ENCODE measurements at regions of chr16 and their contacts with region 1.

Region 1: GRCh38 chr16:55711959-55712876 is 56.4 kb downstream of the SLC6A2 start:
- DNase-seq: no peak
- ATAC-seq: peak; percentile 40
- H3K4me3 Mint-ChIP-seq: no peak overlapping the region
- H3K27ac Mint-ChIP-seq: no peak overlapping the region
- H3K4me1 Mint-ChIP-seq: no peaks in the 10 kb centered on the region
- H3K27me3 Mint-ChIP-seq: peaks cover 18% of the 10 kb centered on the region
- CTCF ChIP-seq: peak; percentile 67

Region 2: GRCh38 chr16:55687802-55688201 is 24.4 kb before region 1 on chr16:
- CTCF ChIA-PET with region 1: no interaction called
- POLR2A ChIA-PET with region 1: no interaction called
- intact Hi-C with region 1: no loop called
- DNase-seq: no peak
- ATAC-seq: no peak
- H3K4me3 Mint-ChIP-seq: no peak overlapping the region
- H3K27ac Mint-ChIP-seq: no peak overlapping the region
- H3K4me1 Mint-ChIP-seq: no peaks in the 10 kb centered on the region
- H3K27me3 Mint-ChIP-seq: peaks cover 4% of the 10 kb centered on the region
- CTCF ChIP-seq: no peak

Region 3: DNA sequence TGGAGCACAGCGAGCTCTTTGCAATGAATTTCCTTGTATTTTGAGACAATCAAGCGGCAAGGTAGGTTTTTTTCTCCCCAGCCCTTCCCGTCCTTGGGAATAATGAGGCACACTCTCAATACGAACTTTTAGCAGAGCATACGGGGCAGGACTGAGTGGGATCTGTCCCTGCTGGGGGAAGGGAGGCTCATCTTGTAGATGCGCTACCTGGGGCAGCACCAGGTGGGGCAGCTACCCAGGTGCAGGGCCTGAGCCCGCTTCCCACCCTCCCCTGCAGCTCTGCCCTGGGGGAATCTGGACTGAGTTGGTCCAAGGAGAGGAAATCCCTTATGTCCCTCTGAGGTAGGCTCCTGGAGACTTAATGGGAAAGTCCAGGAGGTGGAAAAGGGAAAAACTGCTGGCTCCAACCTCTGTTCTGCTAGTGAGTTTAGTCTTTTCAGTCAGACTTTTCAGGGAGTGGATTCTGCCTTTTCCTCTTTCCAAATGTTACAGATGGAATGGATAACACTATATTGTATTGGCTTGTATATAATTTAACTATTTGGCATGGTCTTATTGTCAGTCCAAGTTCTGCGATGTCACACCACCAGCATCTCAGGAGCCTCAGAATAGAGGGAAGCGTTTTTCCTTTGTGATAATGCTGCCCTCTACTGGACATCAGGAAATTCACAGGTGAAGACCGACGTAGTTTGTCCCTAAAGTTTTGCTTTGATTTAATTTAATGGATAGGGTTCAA is 130.3 kb after region 1 on chr16:
- CTCF ChIA-PET with region 1: no interaction called
- POLR2A ChIA-PET with region 1: no interaction called
- intact Hi-C with region 1: loop called (anchors 1 kb)
- DNase-seq: no peak
- ATAC-seq: no peak
- H3K4me3 Mint-ChIP-seq: no peak overlapping the region
- H3K27ac Mint-ChIP-seq: no peak overlapping the region
- H3K4me1 Mint-ChIP-seq: no peaks in the 10 kb centered on the region
- H3K27me3 Mint-ChIP-seq: peaks cover 18% of the 10 kb centered on the region
- CTCF ChIP-seq: no peak